CD4-positive, alpha-beta memory T cell (primary cell): ENCODE measurements at regions of chr10 and their contacts with region 1.

Region 1: DNA sequence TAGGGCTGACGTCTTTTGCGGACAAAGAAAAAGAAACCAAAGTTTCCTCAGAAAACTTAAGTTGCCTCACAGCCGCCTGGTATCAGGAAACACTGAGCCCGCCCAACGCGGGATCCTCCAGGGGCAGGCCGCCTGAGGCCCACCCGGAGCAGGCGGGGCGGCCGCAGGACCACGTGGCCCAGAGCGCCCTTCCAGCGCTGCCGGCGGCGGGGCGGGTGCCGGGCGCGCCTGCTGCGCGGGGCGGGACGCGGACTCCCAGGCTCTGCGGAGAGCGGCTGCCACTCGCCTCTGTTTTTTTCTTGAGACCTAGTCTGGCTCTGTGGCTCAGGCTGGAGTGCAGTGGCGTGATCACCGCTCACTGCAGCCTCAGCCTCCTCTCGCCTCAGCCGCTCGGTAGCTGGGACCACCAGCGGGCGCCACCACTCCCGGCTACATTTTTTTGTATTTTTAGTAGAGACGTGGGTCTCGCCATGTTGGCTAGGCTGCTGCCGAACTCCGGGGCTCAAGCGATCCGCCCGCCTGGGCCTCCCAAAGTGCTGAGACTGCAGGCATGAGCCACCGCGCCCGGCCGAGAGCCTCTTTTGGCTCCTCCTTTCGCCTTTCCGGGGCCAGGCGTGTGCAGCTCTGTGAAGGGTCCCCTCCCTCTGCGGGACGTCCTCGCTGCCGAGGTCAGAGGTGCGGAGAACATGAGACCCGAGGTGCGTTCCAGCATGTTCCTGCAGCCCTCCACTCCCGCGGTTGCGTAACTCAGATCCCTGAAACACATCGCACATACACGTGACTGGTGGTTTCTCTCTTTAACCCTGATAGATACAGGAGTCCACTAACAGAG is 11.6 kb upstream of the HNRNPF start:
- DNase-seq: peak; percentile 82 to 90 (median 86)
- H3K4me3 ChIP-seq: peak overlapping the region; percentile 82 to 88
- H3K4me3 Mint-ChIP-seq: peak overlapping the region; percentile 85 to 93 (median 90)
- H3K27ac ChIP-seq: peak overlapping the region; percentile 82
- H3K27ac Mint-ChIP-seq: peak overlapping the region; percentile 89 to 98 (median 97)
- H3K4me1 ChIP-seq: peaks cover 36% of the 10 kb centered on the region
- H3K4me1 Mint-ChIP-seq: peaks cover 17 to 48% (median 31%) of the 10 kb centered on the region in 4 donors
- H3K27me3 ChIP-seq: no peaks in the 10 kb centered on the region
- H3K27me3 Mint-ChIP-seq: no peaks in the 10 kb centered on the region

Region 2: DNA sequence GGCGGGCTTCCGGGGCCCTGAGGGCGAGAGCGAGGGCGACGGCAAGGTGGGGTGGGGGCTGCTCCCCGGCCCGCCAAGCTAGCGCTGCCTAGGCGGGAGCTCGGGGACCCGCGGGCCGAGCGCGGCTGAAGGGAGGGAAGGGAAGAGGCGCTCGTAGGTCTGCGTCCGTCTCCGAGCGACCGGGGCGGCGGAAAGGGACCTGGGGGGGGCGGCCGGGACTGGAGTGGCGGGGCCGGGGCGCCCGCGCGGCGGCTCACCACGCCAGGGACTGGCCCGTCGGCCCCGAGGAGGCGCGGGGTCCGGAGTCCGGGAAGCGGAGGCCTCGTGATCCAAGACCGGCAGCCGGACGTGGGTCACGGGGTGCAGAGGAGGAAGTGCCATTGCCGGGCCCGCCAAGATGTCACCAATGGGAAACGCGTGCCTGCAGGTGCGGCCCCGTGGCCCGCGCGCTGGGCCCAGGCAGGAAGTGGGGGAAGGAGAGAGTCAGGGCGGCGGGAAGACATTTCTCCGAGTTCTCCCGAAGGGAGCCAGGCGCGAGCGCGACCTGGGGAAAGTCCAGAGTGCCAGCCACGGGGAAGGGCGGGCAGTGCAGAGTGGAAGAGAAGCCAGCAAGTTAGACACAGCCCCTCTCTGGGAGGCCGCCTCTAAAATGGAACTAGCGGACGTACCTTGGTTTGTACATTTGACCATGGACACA is 23.5 kb before region 1 on chr10:
- CTCF ChIA-PET with region 1: interaction called, 3 read pairs
- POLR2A ChIA-PET with region 1: interaction called, 22 read pairs
- intact Hi-C with region 1: loop called (anchors 1 kb)
- DNase-seq: peak; percentile 67 to 82 (median 75)
- H3K4me3 ChIP-seq: peak overlapping the region; percentile 10 to 67
- H3K4me3 Mint-ChIP-seq: peak overlapping the region; percentile 79 to 100 (median 96)
- H3K27ac ChIP-seq: peak overlapping the region; percentile 100
- H3K27ac Mint-ChIP-seq: peak overlapping the region; percentile 93 to 99 (median 98)
- H3K4me1 ChIP-seq: peaks cover 81% of the 10 kb centered on the region
- H3K4me1 Mint-ChIP-seq: peaks cover 62 to 95% (median 73%) of the 10 kb centered on the region in 4 donors
- H3K27me3 ChIP-seq: no peaks in the 10 kb centered on the region
- H3K27me3 Mint-ChIP-seq: no peaks in the 10 kb centered on the region

Region 3: DNA sequence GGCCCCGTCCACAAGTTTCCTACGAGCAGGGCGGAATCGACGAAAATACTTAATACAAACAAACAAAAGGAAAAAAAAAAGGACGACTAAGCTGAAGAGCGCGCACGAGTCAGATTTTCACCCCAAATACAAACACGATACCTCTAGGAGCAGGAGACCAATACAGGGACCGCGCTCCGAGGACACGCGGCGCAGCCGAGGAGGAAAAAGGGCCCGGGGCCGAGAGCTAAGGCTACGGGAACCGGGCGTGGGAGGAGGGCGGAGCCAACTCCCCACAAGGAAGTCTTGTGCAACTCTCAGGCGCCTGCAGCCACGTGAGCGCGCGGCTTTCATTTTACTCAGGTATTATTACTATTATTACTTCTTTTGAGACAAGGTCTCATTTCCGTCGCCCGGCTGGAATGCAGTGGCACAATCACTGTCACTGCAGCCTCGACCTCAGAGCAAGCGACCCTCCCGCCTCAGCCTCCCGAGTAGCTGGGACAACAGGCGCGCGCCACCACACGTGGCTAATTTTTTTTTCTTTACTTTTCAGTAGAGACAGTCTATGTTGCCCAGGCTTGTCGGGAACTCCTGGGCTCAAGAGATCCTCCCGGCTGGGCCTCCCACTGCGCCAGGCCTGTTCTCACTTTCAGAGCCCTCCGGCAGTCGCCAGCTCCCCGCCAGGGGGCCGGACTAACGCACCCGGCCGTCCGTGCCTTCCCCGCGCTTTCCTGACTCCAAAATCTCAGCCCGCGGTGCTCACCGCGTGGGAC is 12.8 kb before region 1 on chr10:
- CTCF ChIA-PET with region 1: interaction called, 18 read pairs
- POLR2A ChIA-PET with region 1: interaction called, 106 read pairs
- intact Hi-C with region 1: loop called (anchors 1 kb)
- DNase-seq: peak; percentile 81 to 89 (median 84)
- H3K4me3 ChIP-seq: peak overlapping the region; percentile 83 to 85
- H3K4me3 Mint-ChIP-seq: peak overlapping the region; percentile 94 to 100 (median 98)
- H3K27ac ChIP-seq: peak overlapping the region; percentile 100
- H3K27ac Mint-ChIP-seq: peak overlapping the region; percentile 93 to 100 (median 99)
- H3K4me1 ChIP-seq: peaks cover 39% of the 10 kb centered on the region
- H3K4me1 Mint-ChIP-seq: peaks cover 18 to 53% (median 27%) of the 10 kb centered on the region in 4 donors
- H3K27me3 ChIP-seq: no peaks in the 10 kb centered on the region
- H3K27me3 Mint-ChIP-seq: no peaks in the 10 kb centered on the region

Region 4: DNA sequence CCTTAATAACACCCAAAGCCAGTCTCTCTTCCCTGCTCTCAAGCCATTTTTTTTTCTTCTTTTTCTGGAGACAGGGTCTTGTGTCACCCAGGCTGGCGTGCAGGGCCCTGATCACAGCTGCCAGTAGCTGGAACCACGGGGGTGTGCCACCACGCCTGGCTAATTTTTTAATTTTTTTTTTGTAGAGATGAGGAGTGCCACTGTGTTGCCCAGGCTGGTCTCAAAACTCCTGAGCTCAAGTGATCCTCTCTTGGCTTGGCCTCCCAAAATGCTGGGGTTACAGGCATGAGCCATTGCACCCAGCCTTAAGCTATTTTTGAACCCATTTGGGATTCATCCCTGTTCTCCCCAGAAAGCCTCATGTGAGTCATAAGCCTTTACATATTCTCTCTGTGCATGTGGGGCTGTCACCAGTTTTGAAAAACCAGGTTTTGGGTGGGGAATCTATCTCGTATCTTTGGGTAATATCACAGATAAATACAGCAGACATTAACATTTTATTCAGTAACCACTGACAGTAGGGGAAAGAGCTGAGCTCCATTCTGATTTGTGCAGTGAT is 31.9 kb after region 1 on chr10:
- CTCF ChIA-PET with region 1: interaction called, 6 read pairs
- POLR2A ChIA-PET with region 1: interaction called, 16 read pairs
- intact Hi-C with region 1: no loop called
- DNase-seq: no peak
- H3K4me3 ChIP-seq: peak overlapping the region in 1 of 2 donors; percentile 13
- H3K4me3 Mint-ChIP-seq: peak overlapping the region; percentile 70 to 88 (median 80)
- H3K27ac ChIP-seq: peak overlapping the region; percentile 54
- H3K27ac Mint-ChIP-seq: peak overlapping the region; percentile 92 to 97 (median 94)
- H3K4me1 ChIP-seq: peaks cover 52% of the 10 kb centered on the region
- H3K4me1 Mint-ChIP-seq: peaks cover 34 to 51% (median 44%) of the 10 kb centered on the region in 4 donors
- H3K27me3 ChIP-seq: no peaks in the 10 kb centered on the region
- H3K27me3 Mint-ChIP-seq: no peaks in the 10 kb centered on the region

Region 5: DNA sequence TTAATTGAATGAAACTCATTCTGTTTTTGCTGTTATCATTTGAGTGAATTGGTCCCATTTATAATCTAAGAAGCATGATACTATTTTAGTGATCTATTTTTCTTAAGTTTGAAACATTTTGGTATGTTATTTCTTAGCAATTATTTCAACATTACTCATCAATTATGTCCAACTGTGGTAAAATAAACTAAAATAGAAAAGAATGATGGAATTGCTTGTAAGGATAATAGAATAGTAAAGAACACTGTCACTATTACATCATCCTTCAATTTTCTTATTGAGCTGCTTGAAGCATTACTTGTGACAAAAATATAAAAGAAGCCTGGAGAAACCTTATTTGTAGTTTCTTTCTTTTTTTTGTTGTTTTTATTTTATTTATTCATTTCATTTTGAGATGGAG is 58.7 kb after region 1 on chr10:
- CTCF ChIA-PET with region 1: no interaction called
- POLR2A ChIA-PET with region 1: no interaction called
- intact Hi-C with region 1: no loop called
- DNase-seq: no peak
- H3K4me3 ChIP-seq: no peak overlapping the region
- H3K4me3 Mint-ChIP-seq: no peak overlapping the region
- H3K27ac ChIP-seq: no peak overlapping the region
- H3K27ac Mint-ChIP-seq: no peak overlapping the region
- H3K4me1 ChIP-seq: no peaks in the 10 kb centered on the region
- H3K4me1 Mint-ChIP-seq: no peaks in the 10 kb centered on the region
- H3K27me3 ChIP-seq: no peaks in the 10 kb centered on the region
- H3K27me3 Mint-ChIP-seq: no peaks in the 10 kb centered on the region

Region 6: DNA sequence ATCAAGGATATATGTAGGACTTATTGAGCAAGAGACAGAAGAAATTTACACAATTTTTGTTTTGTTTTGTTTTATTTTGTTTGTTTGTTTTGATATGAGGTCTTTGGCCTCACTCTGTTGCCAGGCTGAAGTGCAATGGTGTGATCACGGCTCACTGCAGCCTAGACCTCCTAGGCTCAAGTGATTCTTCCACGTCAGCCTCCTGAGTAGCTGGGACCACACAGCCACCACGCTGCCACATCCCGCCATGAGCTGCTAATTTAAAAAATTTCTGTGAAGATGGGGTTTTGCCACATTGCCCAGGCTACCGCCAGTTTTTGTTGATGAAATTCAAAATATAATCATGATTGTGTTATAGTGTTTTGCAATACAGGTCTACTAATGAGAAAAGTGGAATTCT is 71.3 kb after region 1 on chr10:
- CTCF ChIA-PET with region 1: no interaction called
- POLR2A ChIA-PET with region 1: no interaction called
- intact Hi-C with region 1: no loop called
- DNase-seq: no peak
- H3K4me3 ChIP-seq: no peak overlapping the region
- H3K4me3 Mint-ChIP-seq: no peak overlapping the region
- H3K27ac ChIP-seq: no peak overlapping the region
- H3K27ac Mint-ChIP-seq: no peak overlapping the region
- H3K4me1 ChIP-seq: no peaks in the 10 kb centered on the region
- H3K4me1 Mint-ChIP-seq: no peaks in the 10 kb centered on the region
- H3K27me3 ChIP-seq: no peaks in the 10 kb centered on the region
- H3K27me3 Mint-ChIP-seq: no peaks in the 10 kb centered on the region